ENCODE measurements at regions of chr20 and their contacts with region 1.

Region 1: GRCh38 chr20:18739751-18740166 is 73.8 kb upstream of the SCP2D1 start:
- DNase-seq: no peak
- ATAC-seq: no peak
- H3K4me3 ChIP-seq: no peak overlapping the region
- H3K27ac ChIP-seq: no peak overlapping the region
- H3K4me1 ChIP-seq: no peaks in the 10 kb centered on the region
- H3K27me3 ChIP-seq: no peaks in the 10 kb centered on the region
- CTCF ChIP-seq: no peak

Region 2: GRCh38 chr20:18639501-18639979 is 100.2 kb before region 1 on chr20:
- intact Hi-C with region 1: loop called in 1 of 2 experiments (anchors 5 kb)
- DNase-seq: no peak
- ATAC-seq: peak; percentile 93 to 99 (median 99)
- H3K4me3 ChIP-seq: peak overlapping the region; percentile 20
- H3K27ac ChIP-seq: peak overlapping the region; percentile 67
- H3K4me1 ChIP-seq: peaks cover 14% of the 10 kb centered on the region
- H3K27me3 ChIP-seq: no peaks in the 10 kb centered on the region
- CTCF ChIP-seq: no peak

Region 3: DNA sequence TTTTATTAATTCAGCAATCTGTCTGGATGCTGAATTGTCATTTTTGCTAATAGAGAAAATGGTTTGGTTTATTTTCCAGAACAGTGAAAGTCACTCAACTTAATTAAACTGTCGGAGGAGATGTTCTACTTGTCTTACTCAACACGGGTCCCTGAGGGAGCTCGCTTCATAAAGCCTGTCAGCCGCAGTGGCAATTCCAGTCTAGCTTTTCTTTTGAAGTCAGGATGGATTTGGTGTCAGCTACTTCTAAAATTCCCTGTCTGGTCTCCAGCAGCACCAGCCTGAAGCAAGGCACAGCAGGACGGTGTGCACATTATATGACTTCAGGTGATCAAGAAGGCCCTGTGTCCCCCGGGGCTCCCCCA is 734.1 kb after region 1 on chr20:
- intact Hi-C with region 1: no loop called
- DNase-seq: no peak
- ATAC-seq: peak in 1 of 4 donors; percentile 28
- H3K4me3 ChIP-seq: no peak overlapping the region
- H3K27ac ChIP-seq: no peak overlapping the region
- H3K4me1 ChIP-seq: no peaks in the 10 kb centered on the region
- H3K27me3 ChIP-seq: no peaks in the 10 kb centered on the region
- CTCF ChIP-seq: no peak